Activated CD8-positive, alpha-beta T cell treated with anti-CD3 and anti-CD28 coated beads for 36 hours (primary cell): ENCODE measurements at regions of chr1 and their contacts with region 1.

Region 1: GRCh38 chr1:76154206-76154956 is 79.8 kb downstream of the ST6GALNAC3 start:
- DNase-seq: peak; percentile 87
- ATAC-seq: peak; percentile 95
- H3K4me3 Mint-ChIP-seq: peak overlapping the region; percentile 82
- H3K27ac Mint-ChIP-seq: peak overlapping the region; percentile 92
- H3K4me1 Mint-ChIP-seq: peaks cover 4% of the 10 kb centered on the region
- H3K27me3 Mint-ChIP-seq: no peaks in the 10 kb centered on the region
- CTCF ChIP-seq: peak; percentile 91

Region 2: DNA sequence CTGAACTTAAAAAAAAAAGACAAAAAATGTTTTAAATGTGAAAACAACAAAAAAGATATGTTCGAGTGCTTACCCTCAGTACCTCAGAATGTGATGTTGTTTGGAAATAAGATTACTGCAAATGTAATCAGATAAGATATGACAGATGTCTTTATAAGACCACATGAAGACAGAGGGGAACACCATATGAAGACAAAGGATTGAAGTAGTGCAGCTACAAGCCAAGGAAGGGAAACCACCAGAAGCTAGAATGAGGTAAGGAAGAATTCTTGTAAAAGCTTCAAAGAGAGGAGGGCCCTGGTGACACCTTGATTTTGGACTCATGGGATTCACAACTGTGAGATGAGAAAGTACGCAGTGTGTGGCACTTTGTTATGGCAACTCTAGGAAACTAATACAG is 237.5 kb before region 1 on chr1:
- CTCF ChIA-PET with region 1: no interaction called
- POLR2A ChIA-PET with region 1: no interaction called
- intact Hi-C with region 1: no loop called
- DNase-seq: no peak
- ATAC-seq: no peak
- H3K4me3 Mint-ChIP-seq: no peak overlapping the region
- H3K27ac Mint-ChIP-seq: no peak overlapping the region
- H3K4me1 Mint-ChIP-seq: no peaks in the 10 kb centered on the region
- H3K27me3 Mint-ChIP-seq: peaks cover 7% of the 10 kb centered on the region
- CTCF ChIP-seq: no peak

Region 3: DNA sequence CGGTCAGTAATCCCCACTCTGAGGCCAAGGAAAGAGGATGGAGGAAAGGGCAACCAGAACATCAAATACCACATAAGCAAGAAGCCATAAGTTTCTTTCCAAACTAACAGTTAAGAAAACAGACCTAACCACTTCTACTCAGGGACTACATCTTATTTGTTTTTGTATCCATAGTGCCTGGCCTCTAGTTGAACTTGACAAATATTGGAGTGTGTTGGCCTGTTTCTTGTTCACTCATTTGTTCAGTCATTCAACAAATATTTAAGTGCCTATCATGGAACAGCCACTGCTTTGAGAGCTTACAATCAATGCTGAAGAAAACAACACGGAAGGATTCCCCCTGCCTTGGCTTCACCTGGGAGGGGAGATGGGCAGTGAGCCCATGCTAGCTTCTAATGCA is 10.1 kb before region 1 on chr1:
- CTCF ChIA-PET with region 1: interaction called, 14 read pairs
- POLR2A ChIA-PET with region 1: no interaction called
- intact Hi-C with region 1: no loop called
- DNase-seq: no peak
- ATAC-seq: no peak
- H3K4me3 Mint-ChIP-seq: no peak overlapping the region
- H3K27ac Mint-ChIP-seq: no peak overlapping the region
- H3K4me1 Mint-ChIP-seq: no peaks in the 10 kb centered on the region
- H3K27me3 Mint-ChIP-seq: peaks cover 3% of the 10 kb centered on the region
- CTCF ChIP-seq: no peak

Region 4: GRCh38 chr1:76170513-76170912 is 16.1 kb after region 1 on chr1:
- CTCF ChIA-PET with region 1: interaction called, 22 read pairs
- POLR2A ChIA-PET with region 1: interaction called, 3 read pairs
- intact Hi-C with region 1: no loop called
- DNase-seq: no peak
- ATAC-seq: no peak
- H3K4me3 Mint-ChIP-seq: no peak overlapping the region
- H3K27ac Mint-ChIP-seq: no peak overlapping the region
- H3K4me1 Mint-ChIP-seq: peaks cover 5% of the 10 kb centered on the region
- H3K27me3 Mint-ChIP-seq: no peaks in the 10 kb centered on the region
- CTCF ChIP-seq: no peak

Region 5: GRCh38 chr1:76269155-76269554 is 114.8 kb after region 1 on chr1:
- CTCF ChIA-PET with region 1: interaction called, 4 read pairs
- POLR2A ChIA-PET with region 1: no interaction called
- intact Hi-C with region 1: loop called (anchors 10 kb)
- DNase-seq: peak; percentile 23
- ATAC-seq: peak; percentile 50
- H3K4me3 Mint-ChIP-seq: no peak overlapping the region
- H3K27ac Mint-ChIP-seq: peak overlapping the region; percentile 71
- H3K4me1 Mint-ChIP-seq: peaks cover 45% of the 10 kb centered on the region
- H3K27me3 Mint-ChIP-seq: no peaks in the 10 kb centered on the region
- CTCF ChIP-seq: no peak

Region 6: DNA sequence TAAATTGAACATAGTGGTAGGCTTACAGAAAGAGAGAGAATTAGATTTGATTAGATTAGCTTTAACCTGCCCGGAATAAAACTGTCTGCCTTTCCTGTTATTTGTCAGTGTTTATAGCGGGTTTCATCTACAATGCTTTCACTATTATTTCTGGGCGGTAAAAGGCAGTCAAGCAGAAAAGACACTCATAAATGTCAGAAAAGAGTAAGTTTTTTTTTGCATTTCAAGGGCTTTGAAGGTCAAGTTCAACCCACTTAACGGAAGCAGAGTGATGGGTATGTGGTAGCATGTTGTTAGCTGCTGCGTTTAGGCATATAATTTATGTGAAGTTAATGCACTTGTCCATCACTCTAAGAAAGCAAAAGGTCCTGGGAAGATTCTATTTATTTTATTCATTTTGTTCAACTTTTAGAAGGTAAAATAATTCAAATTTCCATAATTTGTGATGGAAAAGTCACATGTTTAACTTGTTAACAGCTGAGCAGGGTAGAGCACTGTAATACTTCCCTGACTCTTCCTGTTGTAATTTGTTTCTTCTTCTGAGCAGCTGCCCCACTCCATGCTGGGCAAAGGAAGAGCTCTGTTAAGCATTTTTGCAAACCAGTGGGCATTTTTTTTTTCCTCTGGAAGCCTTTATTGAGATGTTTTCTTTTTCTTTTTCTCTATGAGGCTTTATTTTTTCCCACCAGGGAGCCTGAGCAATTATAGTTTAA is 140.3 kb after region 1 on chr1:
- CTCF ChIA-PET with region 1: interaction called, 10 read pairs
- POLR2A ChIA-PET with region 1: no interaction called
- intact Hi-C with region 1: no loop called
- DNase-seq: no peak
- ATAC-seq: peak; percentile 79
- H3K4me3 Mint-ChIP-seq: peak overlapping the region; percentile 37
- H3K27ac Mint-ChIP-seq: peak overlapping the region; percentile 70
- H3K4me1 Mint-ChIP-seq: peaks cover 37% of the 10 kb centered on the region
- H3K27me3 Mint-ChIP-seq: no peaks in the 10 kb centered on the region
- CTCF ChIP-seq: no peak

Region 7: GRCh38 chr1:76330991-76331603 is 176.7 kb after region 1 on chr1:
- CTCF ChIA-PET with region 1: interaction called, 8 read pairs
- POLR2A ChIA-PET with region 1: no interaction called
- intact Hi-C with region 1: loop called (anchors 10 kb)
- DNase-seq: peak; percentile 62
- ATAC-seq: peak; percentile 91
- H3K4me3 Mint-ChIP-seq: no peak overlapping the region
- H3K27ac Mint-ChIP-seq: no peak overlapping the region
- H3K4me1 Mint-ChIP-seq: peaks cover 6% of the 10 kb centered on the region
- H3K27me3 Mint-ChIP-seq: no peaks in the 10 kb centered on the region
- CTCF ChIP-seq: peak; percentile 85

Region 8: DNA sequence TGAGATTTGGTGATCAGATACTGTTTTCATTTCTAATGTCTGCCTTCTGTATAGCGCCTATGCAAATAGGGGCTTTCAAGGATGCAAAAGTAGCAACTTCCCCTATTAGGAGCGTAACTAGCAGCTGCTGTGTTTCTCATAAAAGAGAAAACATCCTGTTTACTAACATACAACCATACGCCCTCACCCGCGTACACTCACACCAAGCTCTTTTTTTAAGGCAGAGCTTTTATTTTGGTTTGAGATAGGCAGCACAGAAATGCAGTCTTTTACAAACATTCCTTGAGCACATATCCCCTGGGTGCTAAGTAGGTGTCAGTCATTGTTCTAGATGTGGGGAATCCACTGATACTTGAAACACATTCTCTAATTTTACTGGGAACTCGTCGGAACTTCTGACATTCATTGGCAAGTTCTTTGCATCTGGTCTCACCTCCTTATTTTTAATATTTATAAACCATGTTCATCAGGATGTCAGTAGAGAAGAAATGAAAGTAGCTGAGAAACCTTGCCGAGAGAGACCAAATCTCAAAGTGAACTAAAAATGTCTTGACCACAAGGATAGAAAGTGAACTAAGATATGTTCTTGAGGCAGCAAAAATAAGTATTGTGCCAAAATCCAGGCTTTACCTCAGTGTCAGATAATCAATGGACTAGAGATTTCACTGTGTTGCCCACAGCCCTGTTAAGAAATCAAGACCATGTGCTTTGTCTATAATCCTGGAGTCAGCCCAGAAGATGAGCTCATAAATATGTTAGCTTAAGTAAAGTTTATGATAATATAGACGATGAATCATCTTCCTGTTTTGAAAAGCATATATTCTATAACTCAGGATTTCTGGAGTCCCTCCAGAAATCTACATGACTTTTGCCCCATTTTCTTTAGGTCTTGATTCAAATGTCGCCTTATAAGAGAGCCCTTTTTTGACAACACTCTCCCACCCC is 271.1 kb after region 1 on chr1:
- CTCF ChIA-PET with region 1: no interaction called
- POLR2A ChIA-PET with region 1: no interaction called
- intact Hi-C with region 1: no loop called
- DNase-seq: no peak
- ATAC-seq: no peak
- H3K4me3 Mint-ChIP-seq: no peak overlapping the region
- H3K27ac Mint-ChIP-seq: no peak overlapping the region
- H3K4me1 Mint-ChIP-seq: no peaks in the 10 kb centered on the region
- H3K27me3 Mint-ChIP-seq: no peaks in the 10 kb centered on the region
- CTCF ChIP-seq: no peak

Region 9: GRCh38 chr1:77143529-77144121 is 989.2 kb after region 1 on chr1:
- CTCF ChIA-PET with region 1: interaction called, 7 read pairs
- POLR2A ChIA-PET with region 1: no interaction called
- intact Hi-C with region 1: loop called (anchors 10 kb)
- DNase-seq: no peak
- ATAC-seq: no peak
- H3K4me3 Mint-ChIP-seq: no peak overlapping the region
- H3K27ac Mint-ChIP-seq: no peak overlapping the region
- H3K4me1 Mint-ChIP-seq: peaks cover 3% of the 10 kb centered on the region
- H3K27me3 Mint-ChIP-seq: no peaks in the 10 kb centered on the region
- CTCF ChIP-seq: peak; percentile 56